ENCODE measurements at regions of chr7 and their contacts with region 1.

Region 1: GRCh38 chr7:7816084-7816483 is 97.7 kb upstream of the RPA3 start:
- DNase-seq: peak; percentile 85
- ATAC-seq: peak; percentile 53
- H3K4me3 ChIP-seq: peak overlapping the region; percentile 32
- H3K27ac ChIP-seq: peak overlapping the region; percentile 67
- H3K4me1 ChIP-seq: peaks cover 43% of the 10 kb centered on the region
- H3K27me3 ChIP-seq: no peaks in the 10 kb centered on the region
- CTCF ChIP-seq: no peak
- EP300 ChIP-seq: peak; percentile 73 to 92
- POLR2A ChIP-seq: 0 out of 2 replicates have a peak, but pooled peaks have one; percentile 29
- RAD21 ChIP-seq: no peak

Region 2: DNA sequence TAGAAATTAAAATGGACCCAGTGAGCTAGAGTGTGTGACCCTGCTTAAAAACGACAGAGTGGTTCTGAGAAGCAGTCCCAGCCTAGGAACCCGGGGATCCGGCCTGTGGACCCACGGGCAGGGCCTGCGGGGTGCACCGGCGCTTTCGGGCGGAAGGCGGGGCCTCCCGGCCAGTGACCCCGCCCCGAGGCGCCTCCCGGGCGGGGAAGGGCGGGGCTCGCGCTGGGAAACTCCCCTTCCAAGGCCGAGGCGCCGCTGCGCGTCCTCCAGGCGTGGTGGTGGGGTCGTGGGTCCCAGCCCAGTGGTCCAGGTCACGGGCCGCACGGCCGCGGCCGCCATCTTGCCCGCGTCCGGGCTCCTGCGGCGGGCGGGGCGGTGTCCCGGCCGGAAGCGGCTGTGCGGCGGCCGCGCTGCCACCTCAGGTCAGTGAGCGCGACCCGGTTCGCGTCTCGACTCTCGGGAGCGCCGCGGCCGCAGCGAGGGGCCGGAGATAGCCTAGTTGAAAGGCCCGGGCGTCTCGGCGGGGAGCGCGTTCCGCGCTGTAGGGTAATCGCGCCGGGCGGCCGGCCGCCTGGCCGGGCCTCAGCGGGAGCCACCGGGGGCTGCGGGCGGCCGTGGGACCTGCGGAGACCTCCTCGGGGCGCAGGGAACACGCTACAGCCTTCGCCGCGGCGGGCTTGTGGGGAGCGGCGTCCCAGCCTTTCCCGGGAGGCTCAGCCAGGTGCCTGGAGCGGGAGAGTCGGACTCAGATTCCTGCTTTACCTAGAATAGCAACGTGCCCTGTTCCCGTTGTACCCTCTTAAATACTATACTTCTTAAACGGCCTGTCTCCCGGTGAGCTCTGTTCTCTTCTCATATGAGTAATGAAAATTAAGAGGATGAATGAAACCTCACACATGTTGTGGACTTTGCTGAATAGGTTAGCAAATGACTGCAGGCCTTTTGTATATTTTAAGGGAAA is 249.2 kb before region 1 on chr7 and contains the start of gene MIOS:
- CTCF ChIA-PET with region 1: no interaction called
- POLR2A ChIA-PET with region 1: no interaction called
- RAD21 ChIA-PET with region 1: no interaction called
- SMC1A ChIA-PET with region 1: interaction called, 3 read pairs
- in situ Hi-C with region 1: no loop called
- intact Hi-C with region 1: loop called (anchors 5 kb)
- DNase-seq: no peak
- ATAC-seq: peak; percentile 74
- H3K4me3 ChIP-seq: peak within 1 kb of the TSS; percentile 89
- H3K27ac ChIP-seq: peak within 1 kb of the TSS; percentile 99
- H3K4me1 ChIP-seq: peaks cover 9% of the 10 kb centered on the region
- H3K27me3 ChIP-seq: no peaks in the 10 kb centered on the region
- CTCF ChIP-seq: no peak
- EP300 ChIP-seq: no peak
- POLR2A ChIP-seq: peak; percentile 89
- RAD21 ChIP-seq: no peak
- polyA plus RNA-seq, gene MIOS: 13.1 to 18.7 TPM

Region 3: DNA sequence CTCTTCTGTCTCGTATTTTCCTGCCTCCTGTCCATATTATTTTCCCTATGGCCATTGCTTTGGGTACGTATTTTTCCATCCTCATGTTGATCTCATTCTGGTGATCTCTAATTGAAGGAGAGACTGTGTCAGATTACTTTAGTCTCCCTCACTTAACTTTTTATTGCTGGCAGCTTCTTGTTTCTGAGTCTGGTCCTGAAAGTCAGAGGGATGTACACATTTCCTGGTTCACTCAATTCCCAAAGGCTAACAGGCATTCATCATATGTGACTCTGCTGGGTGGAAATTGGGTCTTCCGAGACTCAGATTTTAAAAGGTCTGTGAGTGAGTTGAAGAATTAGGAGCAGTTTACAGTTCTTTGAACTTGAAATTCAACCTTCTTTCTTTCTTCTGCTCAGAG is 164.6 kb before region 1 on chr7:
- CTCF ChIA-PET with region 1: no interaction called
- POLR2A ChIA-PET with region 1: no interaction called
- RAD21 ChIA-PET with region 1: no interaction called
- SMC1A ChIA-PET with region 1: no interaction called
- in situ Hi-C with region 1: no loop called
- intact Hi-C with region 1: no loop called
- DNase-seq: no peak
- ATAC-seq: no peak
- H3K4me3 ChIP-seq: no peak overlapping the region
- H3K27ac ChIP-seq: no peak overlapping the region
- H3K4me1 ChIP-seq: no peaks in the 10 kb centered on the region
- H3K27me3 ChIP-seq: no peaks in the 10 kb centered on the region
- CTCF ChIP-seq: no peak
- EP300 ChIP-seq: no peak
- POLR2A ChIP-seq: no peak
- RAD21 ChIP-seq: no peak

Region 4: GRCh38 chr7:7772397-7772821 is 43.7 kb before region 1 on chr7:
- CTCF ChIA-PET with region 1: interaction called, 4 read pairs
- POLR2A ChIA-PET with region 1: interaction called, 6 read pairs
- RAD21 ChIA-PET with region 1: interaction called, 39 read pairs
- SMC1A ChIA-PET with region 1: interaction called, 43 read pairs
- in situ Hi-C with region 1: no loop called
- intact Hi-C with region 1: loop called (anchors 2 kb)
- DNase-seq: no peak
- ATAC-seq: peak; percentile 77
- H3K4me3 ChIP-seq: 0 out of 2 replicates have a peak overlapping the region, but pooled peaks have one; percentile 6
- H3K27ac ChIP-seq: no peak overlapping the region
- H3K4me1 ChIP-seq: peaks cover 18% of the 10 kb centered on the region
- H3K27me3 ChIP-seq: no peaks in the 10 kb centered on the region
- CTCF ChIP-seq: no peak
- EP300 ChIP-seq: no peak
- POLR2A ChIP-seq: no peak
- RAD21 ChIP-seq: no peak

Region 5: GRCh38 chr7:7857143-7857583 is 41.1 kb after region 1 on chr7:
- CTCF ChIA-PET with region 1: no interaction called
- POLR2A ChIA-PET with region 1: interaction called, 4 read pairs
- RAD21 ChIA-PET with region 1: interaction called, 10 read pairs
- SMC1A ChIA-PET with region 1: interaction called, 13 read pairs
- in situ Hi-C with region 1: no loop called
- intact Hi-C with region 1: no loop called
- DNase-seq: no peak
- ATAC-seq: peak; percentile 84
- H3K4me3 ChIP-seq: no peak overlapping the region
- H3K27ac ChIP-seq: peak overlapping the region; percentile 29; the same call in 1 of the 2 replicates
- H3K4me1 ChIP-seq: peaks cover 4% of the 10 kb centered on the region
- H3K27me3 ChIP-seq: no peaks in the 10 kb centered on the region
- CTCF ChIP-seq: no peak
- EP300 ChIP-seq: no peak
- POLR2A ChIP-seq: no peak
- RAD21 ChIP-seq: no peak

Region 6: GRCh38 chr7:7968543-7969305 is 152.6 kb after region 1 on chr7 and contains the start of gene GLCCI1:
- CTCF ChIA-PET with region 1: interaction called, 3 read pairs
- POLR2A ChIA-PET with region 1: interaction called, 10 read pairs
- RAD21 ChIA-PET with region 1: interaction called, 56 read pairs
- SMC1A ChIA-PET with region 1: interaction called, 21 read pairs
- in situ Hi-C with region 1: loop called (anchors 5 kb)
- intact Hi-C with region 1: loop called (anchors 2 kb)
- DNase-seq: peak; percentile 98
- ATAC-seq: peak; percentile 88
- H3K4me3 ChIP-seq: peak within 1 kb of the TSS; percentile 82
- H3K27ac ChIP-seq: peak within 1 kb of the TSS; percentile 95
- H3K4me1 ChIP-seq: peaks cover 31% of the 10 kb centered on the region
- H3K27me3 ChIP-seq: no peaks in the 10 kb centered on the region
- CTCF ChIP-seq: no peak
- EP300 ChIP-seq: peak; percentile 21 to 61; a peak in 1 of 4 replicates
- POLR2A ChIP-seq: peak; percentile 74
- RAD21 ChIP-seq: no peak
- polyA plus RNA-seq, gene GLCCI1: 16.2 to 17.9 TPM

Region 7: DNA sequence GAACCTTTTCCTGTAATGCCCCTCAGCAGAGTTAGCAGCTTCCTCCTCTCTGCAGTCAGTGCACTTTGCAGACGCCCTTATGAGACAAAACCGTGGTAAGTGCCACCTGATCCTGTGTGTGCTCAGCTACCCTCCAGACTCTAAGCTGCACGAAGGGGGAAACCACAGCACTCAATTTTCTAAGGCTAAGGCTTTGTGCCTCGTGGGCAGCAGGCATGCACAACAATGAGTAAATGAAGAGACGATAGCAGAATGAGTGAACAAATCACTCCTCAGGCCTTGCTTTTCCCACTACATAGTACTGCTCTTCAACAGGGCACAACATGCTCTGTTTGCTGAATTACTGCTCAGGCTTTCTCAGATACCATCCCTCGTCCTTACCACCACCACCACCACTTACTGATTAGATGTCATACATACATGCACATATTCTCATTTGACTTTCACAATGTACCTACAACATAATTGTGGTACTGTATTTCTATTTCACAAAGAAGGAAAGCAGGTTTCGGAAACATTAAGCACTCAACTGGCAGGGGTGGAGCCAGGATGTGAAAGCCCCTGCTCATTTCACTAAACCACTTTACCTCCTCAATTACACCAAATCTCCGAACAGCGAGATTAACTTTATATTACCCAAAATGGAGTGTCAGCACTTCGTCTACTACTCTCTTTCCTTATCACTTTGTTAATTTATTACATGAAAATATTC is 360.4 kb after region 1 on chr7:
- CTCF ChIA-PET with region 1: no interaction called
- POLR2A ChIA-PET with region 1: no interaction called
- RAD21 ChIA-PET with region 1: interaction called, 10 read pairs
- SMC1A ChIA-PET with region 1: interaction called, 5 read pairs
- in situ Hi-C with region 1: no loop called
- intact Hi-C with region 1: loop called (anchors 2 kb)
- DNase-seq: peak; percentile 96
- ATAC-seq: peak; percentile 82
- H3K4me3 ChIP-seq: peak overlapping the region; percentile 8
- H3K27ac ChIP-seq: peak overlapping the region; percentile 98
- H3K4me1 ChIP-seq: peaks cover 39% of the 10 kb centered on the region
- H3K27me3 ChIP-seq: no peaks in the 10 kb centered on the region
- CTCF ChIP-seq: no peak
- EP300 ChIP-seq: peak; percentile 22 to 52; a peak in 2 of 4 replicates
- POLR2A ChIP-seq: peak; percentile 62
- RAD21 ChIP-seq: 0 out of 2 replicates have a peak, but pooled peaks have one; percentile 3

Measured in GM12878 (cell line).